ENCODE measurements at regions of chr12 and their contacts with region 1.

Region 1: GRCh38 chr12:47837190-47838171 is 17.8 kb upstream of the HDAC7 start:
- DNase-seq: peak; percentile 87

Region 2: GRCh38 chr12:47651368-47652254 is 185.9 kb before region 1 on chr12:
- intact Hi-C with region 1: loop called (anchors 5 kb)
- DNase-seq: no peak

Region 3: DNA sequence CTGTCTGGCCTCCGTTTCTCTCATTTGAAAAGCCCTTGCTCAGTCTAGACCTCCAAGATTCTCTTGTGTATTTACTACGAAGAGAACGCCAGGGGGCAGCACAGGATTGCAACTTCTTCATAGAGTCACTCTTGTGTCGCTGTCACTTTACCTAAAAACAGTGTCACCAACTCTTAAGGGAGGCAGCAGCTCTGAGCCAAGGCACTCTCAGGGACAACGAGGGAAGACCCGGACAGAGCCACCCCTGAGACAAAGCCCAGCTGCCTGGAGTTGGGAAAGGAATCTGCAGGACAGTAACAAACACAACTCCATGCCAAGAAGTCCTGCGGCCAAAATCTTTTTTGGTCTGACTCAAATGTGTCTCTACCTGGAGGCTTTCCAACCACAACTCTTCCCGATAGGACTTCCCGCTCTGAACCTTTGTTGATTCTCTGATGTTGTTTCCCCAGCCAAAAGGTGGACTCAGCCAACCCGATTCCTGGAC is 122.0 kb before region 1 on chr12:
- intact Hi-C with region 1: loop called (anchors 1 kb)
- DNase-seq: peak; percentile 88

Region 4: DNA sequence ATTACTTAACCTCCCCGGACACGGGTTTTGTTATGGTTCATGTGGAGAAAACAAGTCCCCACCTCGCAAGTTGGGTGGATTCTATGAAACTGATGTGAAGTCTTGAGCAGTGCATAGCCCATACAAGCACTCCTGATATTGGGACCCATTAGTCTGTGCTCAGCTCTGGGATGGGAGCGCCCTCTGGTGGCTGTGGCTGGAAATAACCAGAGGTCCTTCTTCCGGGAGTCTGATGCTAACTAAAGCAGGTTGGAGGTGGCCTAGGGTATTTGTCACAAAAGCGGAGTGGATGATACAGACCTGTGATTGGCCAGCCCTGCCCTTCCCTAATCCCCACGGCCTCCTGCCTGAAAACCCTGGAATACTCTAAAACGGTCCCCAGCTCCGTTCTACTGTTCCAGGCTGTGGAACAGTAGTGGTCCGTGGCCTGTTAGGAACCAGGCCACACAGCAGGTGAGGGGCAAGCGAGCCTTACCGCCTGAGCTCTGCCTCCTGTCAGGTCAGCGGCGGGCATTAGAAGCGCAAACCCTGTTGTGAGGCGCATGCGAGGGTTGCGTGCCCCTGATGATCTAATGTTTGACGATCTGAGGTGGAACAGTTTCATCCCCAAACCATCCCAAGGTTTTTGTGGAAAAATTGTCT is 58.1 kb before region 1 on chr12:
- intact Hi-C with region 1: loop called (anchors 2 kb)
- DNase-seq: peak; percentile 94

Region 5: GRCh38 chr12:47801170-47801903 is 36.1 kb before region 1 on chr12:
- intact Hi-C with region 1: loop called (anchors 2 kb)
- DNase-seq: no peak

Measured in cardiac septum (tissue), 1 donor.